B cell (primary cell): ENCODE measurements at regions of chr5 and their contacts with region 1.

Region 1: DNA sequence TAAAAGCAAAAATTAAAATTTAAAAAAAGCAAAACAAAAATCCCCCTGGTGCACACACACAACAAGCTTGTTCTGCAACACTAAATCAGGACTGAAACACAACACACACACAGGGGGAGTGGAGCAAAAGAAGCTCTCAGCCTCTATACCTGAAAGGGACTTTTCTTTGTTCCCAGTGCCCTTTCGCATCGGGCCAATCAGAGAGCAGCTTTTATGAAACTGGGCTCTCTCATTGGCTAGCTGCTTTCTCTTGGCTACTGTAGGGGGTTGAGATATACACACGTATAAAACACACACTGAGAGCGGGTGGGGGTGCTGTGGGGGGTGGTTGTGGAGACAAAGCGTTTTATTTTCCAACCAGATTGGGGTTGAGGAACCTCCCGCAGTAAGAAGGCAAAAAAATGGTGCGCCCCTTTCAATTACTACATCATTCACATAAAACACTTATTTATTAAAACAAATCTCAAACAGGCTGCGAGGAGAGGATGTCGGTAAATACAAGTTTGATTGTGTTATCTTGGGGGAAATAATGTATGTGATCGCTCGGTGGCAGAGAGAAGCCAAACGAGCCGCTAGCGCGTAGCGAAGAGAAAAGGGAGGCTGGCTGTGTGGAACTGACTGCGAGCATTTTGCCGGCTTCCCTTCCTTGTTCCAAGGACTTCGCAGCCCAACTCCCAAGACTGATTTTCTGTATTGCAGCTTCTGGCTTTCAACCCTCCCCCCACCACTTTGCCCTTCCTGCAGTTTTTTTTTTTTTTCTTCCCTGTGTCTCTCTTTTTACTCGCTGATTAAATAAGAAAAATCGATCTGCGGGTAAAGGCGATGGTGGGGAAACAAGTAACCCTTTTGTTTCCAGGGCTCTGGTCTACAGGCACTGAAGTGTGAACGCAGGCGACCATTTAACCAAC is 2.5 kb upstream of the ZNF608 start:
- DNase-seq: peak; percentile 90
- ATAC-seq: peak; percentile 68
- H3K4me3 ChIP-seq: peak overlapping the region; percentile 58 to 89 (median 72)
- H3K4me3 Mint-ChIP-seq: no peak overlapping the region
- H3K27ac ChIP-seq: peak overlapping the region; percentile 90 to 93
- H3K27ac Mint-ChIP-seq: peak overlapping the region; percentile 99
- H3K4me1 ChIP-seq: peaks cover 25 to 42% of the 10 kb centered on the region in 2 donors
- H3K4me1 Mint-ChIP-seq: peaks cover 20% of the 10 kb centered on the region
- H3K27me3 ChIP-seq: peaks cover 0 to 10% (median 0%) of the 10 kb centered on the region in 4 experiments
- H3K27me3 Mint-ChIP-seq: no peaks in the 10 kb centered on the region
- CTCF ChIP-seq: no peak

Region 2: DNA sequence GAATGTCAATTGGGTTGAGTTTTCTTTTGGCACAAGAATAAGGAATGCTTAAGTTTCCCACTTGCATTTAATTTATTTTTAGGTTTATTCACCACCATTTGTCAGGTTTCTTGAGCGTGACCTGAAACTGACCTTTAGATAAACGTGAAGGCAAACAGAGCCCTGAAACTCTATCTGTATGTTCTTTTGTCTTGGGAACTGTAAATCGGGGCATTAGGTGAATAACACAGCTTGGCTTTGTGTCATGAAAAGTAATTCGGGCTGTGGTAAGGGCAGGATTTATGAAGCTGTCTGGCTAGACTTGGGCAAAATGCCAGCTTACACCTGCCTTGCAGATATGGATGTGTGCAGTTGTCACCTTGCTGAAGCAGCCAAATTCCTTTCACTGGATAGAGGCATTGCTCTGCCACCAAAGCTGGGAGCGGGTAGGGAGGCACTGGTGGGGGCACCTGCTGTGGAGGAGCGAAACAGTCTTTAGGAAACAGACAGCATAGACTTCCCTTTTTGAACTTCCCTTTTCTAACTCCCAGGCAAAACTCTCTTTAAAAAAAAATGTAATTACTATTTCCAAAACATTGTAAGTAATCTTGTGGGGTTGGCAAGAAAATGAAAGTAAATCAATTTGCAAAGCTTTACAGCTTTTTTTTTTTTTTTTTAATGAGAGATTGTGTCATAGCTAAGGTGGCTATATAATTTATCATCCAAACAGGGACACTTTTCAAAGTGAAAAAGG is 691.8 kb before region 1 on chr5:
- CTCF ChIA-PET with region 1: no interaction called
- POLR2A ChIA-PET with region 1: no interaction called
- intact Hi-C with region 1: loop called (anchors 5 kb)
- DNase-seq: peak; percentile 88
- ATAC-seq: peak; percentile 85
- H3K4me3 ChIP-seq: peak overlapping the region; percentile 30 to 57 (median 54)
- H3K4me3 Mint-ChIP-seq: peak overlapping the region; percentile 94
- H3K27ac ChIP-seq: peak overlapping the region; percentile 71 to 72
- H3K27ac Mint-ChIP-seq: peak overlapping the region; percentile 95
- H3K4me1 ChIP-seq: peaks cover 40 to 45% of the 10 kb centered on the region in 2 donors
- H3K4me1 Mint-ChIP-seq: peaks cover 56% of the 10 kb centered on the region
- H3K27me3 ChIP-seq: no peaks in the 10 kb centered on the region
- H3K27me3 Mint-ChIP-seq: no peaks in the 10 kb centered on the region
- CTCF ChIP-seq: no peak

Region 3: DNA sequence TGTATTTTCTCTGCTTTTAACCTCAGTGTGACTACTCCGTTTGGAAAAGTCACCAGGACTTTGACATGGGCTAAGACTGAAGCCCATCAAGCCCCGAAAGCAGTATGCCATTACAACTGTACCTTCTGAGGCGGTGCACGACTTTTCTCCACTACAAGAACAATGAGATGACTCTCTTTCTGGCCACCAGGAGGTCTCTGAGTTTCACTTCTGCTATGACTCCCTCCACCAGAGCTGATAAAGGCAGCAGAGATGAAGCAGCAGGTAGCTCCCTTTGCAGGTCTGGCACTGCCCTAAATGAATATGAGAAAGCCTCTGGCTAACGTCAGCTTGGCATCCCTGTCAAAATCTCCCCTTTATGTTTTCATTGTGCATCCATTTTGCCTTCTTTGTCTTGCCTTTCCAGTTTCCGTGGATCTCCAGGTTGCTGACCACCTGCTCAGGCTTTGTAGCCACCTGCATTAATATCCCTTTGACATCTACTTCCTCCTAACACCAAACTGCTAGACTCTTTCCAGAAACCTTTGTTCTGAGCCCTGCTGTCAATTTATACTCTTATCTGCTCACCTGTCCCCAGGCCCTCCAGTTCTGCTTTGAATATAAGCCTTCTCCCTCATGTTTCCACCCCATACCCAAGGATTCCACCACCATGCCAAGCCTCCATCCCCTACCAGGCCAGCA is 224.2 kb before region 1 on chr5:
- CTCF ChIA-PET with region 1: interaction called, 14 read pairs
- POLR2A ChIA-PET with region 1: no interaction called
- intact Hi-C with region 1: loop called (anchors 2 kb)
- DNase-seq: peak; percentile 83
- ATAC-seq: peak; percentile 95
- H3K4me3 ChIP-seq: no peak overlapping the region
- H3K4me3 Mint-ChIP-seq: no peak overlapping the region
- H3K27ac ChIP-seq: no peak overlapping the region
- H3K27ac Mint-ChIP-seq: no peak overlapping the region
- H3K4me1 ChIP-seq: peaks cover 14 to 15% of the 10 kb centered on the region in 2 donors
- H3K4me1 Mint-ChIP-seq: peaks cover 26% of the 10 kb centered on the region
- H3K27me3 ChIP-seq: no peaks in the 10 kb centered on the region
- H3K27me3 Mint-ChIP-seq: peaks cover 4% of the 10 kb centered on the region
- CTCF ChIP-seq: peak; percentile 74

Region 4: DNA sequence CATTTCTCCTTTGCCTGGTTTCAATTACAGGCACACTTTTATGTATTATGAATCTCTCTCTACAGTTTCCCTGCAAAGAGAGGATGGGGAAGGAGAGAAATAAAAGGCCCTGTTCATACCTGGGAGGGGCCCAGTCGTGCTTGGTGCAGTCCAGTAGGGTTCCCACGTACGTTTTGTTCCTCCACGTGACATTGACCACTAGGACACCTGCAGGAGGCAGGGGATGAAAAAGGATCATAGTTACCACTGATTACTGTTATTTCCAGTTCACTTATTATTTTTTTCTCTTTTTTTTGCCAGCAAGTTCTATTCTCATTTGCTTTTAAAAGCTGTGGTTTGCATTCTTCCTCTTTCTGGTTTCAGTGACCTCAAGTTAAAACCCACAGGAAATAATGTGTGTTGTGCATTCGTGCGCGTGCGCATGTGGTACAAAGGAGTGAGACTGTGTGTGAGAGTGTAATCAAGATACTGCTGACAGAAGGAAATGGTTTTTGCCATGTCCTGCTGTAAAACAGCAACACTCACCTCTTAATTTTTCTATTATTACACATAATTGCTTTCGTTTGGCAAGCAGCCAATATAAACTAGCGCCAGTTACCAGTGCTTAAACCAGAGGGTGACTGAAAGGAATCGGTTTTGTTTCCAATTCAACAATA is 99.3 kb before region 1 on chr5:
- CTCF ChIA-PET with region 1: interaction called, 7 read pairs
- POLR2A ChIA-PET with region 1: interaction called, 9 read pairs
- intact Hi-C with region 1: loop called (anchors 1 kb)
- DNase-seq: peak; percentile 96
- ATAC-seq: peak; percentile 74
- H3K4me3 ChIP-seq: peak overlapping the region; percentile 1 to 54 (median 25)
- H3K4me3 Mint-ChIP-seq: peak overlapping the region; percentile 38
- H3K27ac ChIP-seq: peak overlapping the region; percentile 76 to 84
- H3K27ac Mint-ChIP-seq: peak overlapping the region; percentile 88
- H3K4me1 ChIP-seq: peaks cover 70 to 88% of the 10 kb centered on the region in 2 donors
- H3K4me1 Mint-ChIP-seq: peaks cover 84% of the 10 kb centered on the region
- H3K27me3 ChIP-seq: peaks cover 0 to 24% (median 0%) of the 10 kb centered on the region in 4 experiments
- H3K27me3 Mint-ChIP-seq: no peaks in the 10 kb centered on the region
- CTCF ChIP-seq: no peak

Region 5: DNA sequence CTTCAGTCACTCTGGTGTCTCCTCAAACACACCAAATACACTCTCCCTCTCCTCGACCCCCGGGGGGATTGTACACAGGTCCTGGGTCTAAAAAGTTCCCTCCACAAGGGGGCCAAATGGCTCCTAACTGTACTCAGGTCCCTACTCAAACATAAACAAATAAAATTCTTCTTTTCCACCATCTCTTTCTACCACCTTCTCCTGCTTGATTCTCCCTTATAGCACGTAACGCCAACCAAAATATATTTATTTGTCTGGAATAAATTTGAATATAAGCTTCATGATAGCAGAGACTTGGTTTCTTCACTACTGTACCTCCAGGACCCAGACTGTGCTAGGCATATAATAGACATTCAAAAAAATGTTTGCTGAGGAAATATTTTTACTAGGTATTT is 23.9 kb before region 1 on chr5:
- CTCF ChIA-PET with region 1: interaction called, 6 read pairs
- POLR2A ChIA-PET with region 1: interaction called, 4 read pairs
- intact Hi-C with region 1: loop called (anchors 2 kb)
- DNase-seq: peak; percentile 54
- ATAC-seq: peak; percentile 71
- H3K4me3 ChIP-seq: peak overlapping the region in 3 of 5 experiments; percentile 6 to 27 (median 12)
- H3K4me3 Mint-ChIP-seq: peak overlapping the region; percentile 81
- H3K27ac ChIP-seq: no peak overlapping the region
- H3K27ac Mint-ChIP-seq: peak overlapping the region; percentile 76
- H3K4me1 ChIP-seq: peaks cover 11 to 19% of the 10 kb centered on the region in 2 donors
- H3K4me1 Mint-ChIP-seq: peaks cover 63% of the 10 kb centered on the region
- H3K27me3 ChIP-seq: no peaks in the 10 kb centered on the region
- H3K27me3 Mint-ChIP-seq: no peaks in the 10 kb centered on the region
- CTCF ChIP-seq: peak; percentile 64

Region 6: DNA sequence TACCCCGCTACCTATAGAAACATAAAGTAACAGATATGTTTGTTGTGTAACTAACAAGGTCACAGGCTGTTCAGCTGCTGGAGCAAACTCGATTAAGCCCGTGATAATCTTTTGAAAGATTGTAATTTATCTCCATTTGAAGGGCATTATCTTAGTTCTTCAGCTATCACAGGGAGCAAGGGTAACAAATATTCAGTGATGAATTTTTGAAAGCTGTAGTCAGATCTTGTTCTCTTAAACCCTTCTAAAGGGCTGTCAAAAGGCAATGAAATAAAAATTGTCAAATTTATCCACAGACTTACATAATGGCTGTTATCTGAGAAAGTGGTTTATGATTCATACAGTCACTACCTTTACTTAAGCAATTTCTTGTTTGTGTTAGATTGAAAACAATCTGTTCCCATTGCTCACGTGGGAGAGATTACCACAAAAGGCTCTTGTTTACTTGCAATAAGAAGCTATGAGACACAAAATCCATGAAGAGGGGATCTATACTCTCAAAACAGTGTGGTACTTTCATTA is 75.8 kb after region 1 on chr5:
- CTCF ChIA-PET with region 1: no interaction called
- POLR2A ChIA-PET with region 1: interaction called, 11 read pairs
- intact Hi-C with region 1: loop called (anchors 1 kb)
- DNase-seq: no peak
- ATAC-seq: no peak
- H3K4me3 ChIP-seq: no peak overlapping the region
- H3K4me3 Mint-ChIP-seq: no peak overlapping the region
- H3K27ac ChIP-seq: peak overlapping the region in 1 of 2 donors; percentile 56
- H3K27ac Mint-ChIP-seq: peak overlapping the region; percentile 51
- H3K4me1 ChIP-seq: peaks cover 16 to 19% of the 10 kb centered on the region in 2 donors
- H3K4me1 Mint-ChIP-seq: peaks cover 18% of the 10 kb centered on the region
- H3K27me3 ChIP-seq: no peaks in the 10 kb centered on the region
- H3K27me3 Mint-ChIP-seq: no peaks in the 10 kb centered on the region
- CTCF ChIP-seq: no peak

Region 7: GRCh38 chr5:124935065-124935464 is 186.1 kb after region 1 on chr5:
- CTCF ChIA-PET with region 1: interaction called, 3 read pairs
- POLR2A ChIA-PET with region 1: no interaction called
- intact Hi-C with region 1: loop called (anchors 1 kb)
- DNase-seq: peak; percentile 81
- ATAC-seq: peak; percentile 69
- H3K4me3 ChIP-seq: no peak overlapping the region
- H3K4me3 Mint-ChIP-seq: peak overlapping the region; percentile 17
- H3K27ac ChIP-seq: peak overlapping the region; percentile 45 to 65
- H3K27ac Mint-ChIP-seq: peak overlapping the region; percentile 84
- H3K4me1 ChIP-seq: peaks cover 15 to 19% of the 10 kb centered on the region in 2 donors
- H3K4me1 Mint-ChIP-seq: peaks cover 17% of the 10 kb centered on the region
- H3K27me3 ChIP-seq: no peaks in the 10 kb centered on the region
- H3K27me3 Mint-ChIP-seq: no peaks in the 10 kb centered on the region
- CTCF ChIP-seq: no peak